ENCODE measurements at regions of chrX and their contacts with region 1.

Region 1: GRCh38 chrX:53088136-53088974 is 5.6 kb upstream of the KANTR start:
- DNase-seq: peak; percentile 89 to 92 (median 92)
- ATAC-seq: peak; percentile 88 to 91
- H3K4me3 ChIP-seq: peak overlapping the region; percentile 59
- H3K27ac ChIP-seq: peak overlapping the region; percentile 94
- H3K4me1 ChIP-seq: peaks cover 3% of the 10 kb centered on the region
- H3K27me3 ChIP-seq: no peaks in the 10 kb centered on the region

Region 2: GRCh38 chrX:53071604-53072417 is 16.5 kb before region 1 on chrX:
- intact Hi-C with region 1: loop called in 1 of 4 experiments (anchors 2 kb)
- DNase-seq: peak; percentile 67 to 90 (median 75)
- ATAC-seq: peak; percentile 87 to 94
- H3K4me3 ChIP-seq: peak overlapping the region; percentile 23
- H3K27ac ChIP-seq: peak overlapping the region; percentile 92
- H3K4me1 ChIP-seq: no peaks in the 10 kb centered on the region
- H3K27me3 ChIP-seq: no peaks in the 10 kb centered on the region